ENCODE measurements at regions of chr7 and their contacts with region 1.

Region 1: GRCh38 chr7:22110227-22110839 is 164.6 kb upstream of the CDCA7L start:
- DNase-seq: peak; percentile 74
- H3K4me3 ChIP-seq: no peak overlapping the region; a peak in 1 of 4 replicates
- H3K27ac ChIP-seq: no peak overlapping the region
- H3K4me1 ChIP-seq: peaks cover 0 to 7% of the 10 kb centered on the region in 2 experiments; a peak in 1 of 4 replicates
- H3K27me3 ChIP-seq: no peaks in the 10 kb centered on the region
- CTCF ChIP-seq: peak; percentile 99
- EP300 ChIP-seq: no peak
- RAD21 ChIP-seq: peak; percentile 100

Region 2: GRCh38 chr7:21850531-21851285 is 259.6 kb before region 1 on chr7:
- CTCF ChIA-PET with region 1: no interaction called
- POLR2A ChIA-PET with region 1: no interaction called
- DNase-seq: no peak
- H3K4me3 ChIP-seq: no peak overlapping the region
- H3K27ac ChIP-seq: peak overlapping the region in 1 of 2 experiments; percentile 2; a peak in 1 of 4 replicates
- H3K4me1 ChIP-seq: no peaks in the 10 kb centered on the region
- H3K27me3 ChIP-seq: no peaks in the 10 kb centered on the region; the same call in 1 of the 2 replicates
- CTCF ChIP-seq: no peak
- EP300 ChIP-seq: no peak
- RAD21 ChIP-seq: no peak

Region 3: DNA sequence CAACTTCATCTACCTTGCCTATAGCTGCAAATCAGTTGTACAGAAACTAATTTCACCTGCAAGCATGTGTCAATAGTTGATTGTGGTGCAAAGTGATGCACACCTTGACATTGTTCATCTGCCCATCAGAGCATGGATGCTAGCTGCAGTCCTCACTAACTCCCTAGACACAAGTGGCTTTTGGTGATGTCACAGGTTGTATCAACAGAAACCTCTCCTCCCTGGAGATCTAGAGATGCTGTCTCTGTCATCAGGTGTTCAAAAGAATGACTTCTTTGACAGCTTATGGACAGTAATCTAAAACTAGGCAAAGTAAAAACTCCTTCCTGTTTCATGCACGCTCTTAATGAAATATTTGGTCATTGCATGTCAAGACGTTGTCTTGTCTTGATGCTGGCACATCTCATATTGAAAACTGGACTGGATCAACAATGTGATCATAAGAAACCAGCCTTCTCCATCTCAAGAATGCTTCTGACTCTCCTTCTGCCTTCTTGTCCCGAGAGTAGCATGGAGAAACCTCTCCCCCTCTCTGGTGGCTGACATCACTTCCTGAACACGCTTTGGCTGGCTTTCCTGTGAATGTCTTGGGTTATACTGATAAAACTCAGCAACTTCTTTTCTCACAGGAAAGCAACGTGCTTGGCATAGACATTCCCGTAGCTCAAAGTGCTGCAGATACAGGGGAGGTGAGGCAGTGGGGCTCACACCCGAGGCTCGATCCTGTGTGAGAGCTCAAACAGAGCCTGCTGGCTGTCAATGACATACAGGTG is 11.6 kb after region 1 on chr7:
- CTCF ChIA-PET with region 1: interaction called, 52 read pairs
- POLR2A ChIA-PET with region 1: no interaction called
- DNase-seq: no peak
- H3K4me3 ChIP-seq: no peak overlapping the region
- H3K27ac ChIP-seq: no peak overlapping the region
- H3K4me1 ChIP-seq: peaks cover 0 to 17% of the 10 kb centered on the region in 2 experiments; a peak in 1 of 4 replicates
- H3K27me3 ChIP-seq: no peaks in the 10 kb centered on the region
- CTCF ChIP-seq: no peak
- EP300 ChIP-seq: no peak
- RAD21 ChIP-seq: no peak

Region 4: DNA sequence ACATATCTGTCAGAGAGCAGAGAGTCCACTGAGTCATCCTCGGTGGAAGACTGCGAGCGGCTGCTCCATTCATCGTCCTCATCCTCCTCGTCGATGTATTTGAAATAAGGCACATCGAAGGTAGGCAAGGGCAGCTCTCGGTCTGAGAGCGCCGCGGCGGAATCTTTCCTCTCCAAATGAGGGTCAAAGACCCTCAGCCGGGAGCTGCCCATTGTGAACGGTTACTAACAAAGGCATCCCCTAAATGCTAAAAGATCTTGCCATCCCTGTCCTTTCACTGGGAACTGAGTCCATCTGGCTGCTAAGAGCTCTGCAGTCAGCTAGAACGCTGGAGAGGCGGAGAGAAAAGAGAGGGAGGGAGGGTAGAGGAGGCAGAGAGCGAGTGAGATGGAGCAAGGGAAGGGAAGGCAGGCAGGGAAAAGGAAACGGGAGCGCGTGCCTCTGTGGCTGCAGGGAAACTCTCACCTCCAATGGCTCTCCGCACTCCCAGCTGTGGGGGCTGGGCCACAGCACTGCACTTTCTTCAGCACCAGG is 83.2 kb after region 1 on chr7:
- CTCF ChIA-PET with region 1: interaction called, 11 read pairs
- POLR2A ChIA-PET with region 1: no interaction called
- DNase-seq: no peak
- H3K4me3 ChIP-seq: no peak overlapping the region
- H3K27ac ChIP-seq: no peak overlapping the region
- H3K4me1 ChIP-seq: peaks cover 0 to 4% of the 10 kb centered on the region in 2 experiments; a peak in 1 of 4 replicates
- H3K27me3 ChIP-seq: no peaks in the 10 kb centered on the region
- CTCF ChIP-seq: no peak
- EP300 ChIP-seq: no peak
- RAD21 ChIP-seq: no peak

Region 5: GRCh38 chr7:22295402-22296264 is 185.3 kb after region 1 on chr7:
- CTCF ChIA-PET with region 1: interaction called, 12 read pairs
- POLR2A ChIA-PET with region 1: no interaction called
- DNase-seq: no peak
- H3K4me3 ChIP-seq: no peak overlapping the region
- H3K27ac ChIP-seq: no peak overlapping the region
- H3K4me1 ChIP-seq: no peaks in the 10 kb centered on the region
- H3K27me3 ChIP-seq: no peaks in the 10 kb centered on the region
- CTCF ChIP-seq: peak; percentile 44
- EP300 ChIP-seq: no peak
- RAD21 ChIP-seq: peak; percentile 47

Region 6: DNA sequence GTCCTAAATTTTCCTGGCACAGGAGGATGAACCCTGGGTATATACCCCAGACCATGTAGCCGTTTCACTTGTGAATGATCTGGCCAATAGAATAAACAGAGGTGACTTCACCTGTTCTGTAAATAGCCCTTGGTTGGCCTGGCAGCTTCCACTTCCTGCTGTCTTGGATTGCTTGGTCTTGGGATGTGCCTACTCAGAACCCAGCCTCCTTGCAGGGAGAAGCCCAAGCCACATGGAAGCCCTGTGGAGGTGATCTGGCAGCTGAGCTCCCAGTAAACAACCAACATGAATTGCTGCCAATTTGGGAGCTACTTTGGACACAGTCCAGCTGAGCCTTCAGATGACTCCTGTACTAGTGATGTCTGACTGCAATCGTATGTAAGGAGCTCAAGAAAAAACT is 251.5 kb after region 1 on chr7:
- CTCF ChIA-PET with region 1: interaction called, 14 read pairs
- POLR2A ChIA-PET with region 1: no interaction called
- DNase-seq: no peak
- H3K4me3 ChIP-seq: no peak overlapping the region
- H3K27ac ChIP-seq: no peak overlapping the region
- H3K4me1 ChIP-seq: peaks cover 0 to 8% of the 10 kb centered on the region in 2 experiments; a peak in 2 of 4 replicates
- H3K27me3 ChIP-seq: no peaks in the 10 kb centered on the region
- CTCF ChIP-seq: no peak
- EP300 ChIP-seq: no peak
- RAD21 ChIP-seq: no peak

Region 7: GRCh38 chr7:22460360-22460983 is 350.1 kb after region 1 on chr7:
- CTCF ChIA-PET with region 1: interaction called, 11 read pairs
- POLR2A ChIA-PET with region 1: no interaction called
- DNase-seq: no peak
- H3K4me3 ChIP-seq: no peak overlapping the region
- H3K27ac ChIP-seq: no peak overlapping the region
- H3K4me1 ChIP-seq: no peaks in the 10 kb centered on the region
- H3K27me3 ChIP-seq: no peaks in the 10 kb centered on the region
- CTCF ChIP-seq: no peak
- EP300 ChIP-seq: no peak
- RAD21 ChIP-seq: no peak

Region 8: GRCh38 chr7:22499044-22499443 is 388.7 kb after region 1 on chr7:
- CTCF ChIA-PET with region 1: interaction called, 69 read pairs
- POLR2A ChIA-PET with region 1: no interaction called
- DNase-seq: no peak
- H3K4me3 ChIP-seq: peak overlapping the region in 1 of 2 experiments; percentile 62; a peak in 3 of 4 replicates
- H3K27ac ChIP-seq: peak overlapping the region in 1 of 2 experiments; percentile 91; a peak in 2 of 4 replicates
- H3K4me1 ChIP-seq: peaks cover 3 to 28% of the 10 kb centered on the region in 2 experiments; a peak in 3 of 4 replicates
- H3K27me3 ChIP-seq: peaks cover under 1% of the 10 kb centered on the region; the same call in 1 of the 2 replicates
- CTCF ChIP-seq: no peak
- EP300 ChIP-seq: no peak
- RAD21 ChIP-seq: no peak

Region 9: GRCh38 chr7:22718200-22718711 is 607.9 kb after region 1 on chr7:
- CTCF ChIA-PET with region 1: no interaction called
- POLR2A ChIA-PET with region 1: no interaction called
- DNase-seq: no peak
- H3K4me3 ChIP-seq: peak overlapping the region in 1 of 2 experiments; percentile 36; a peak in 2 of 4 replicates
- H3K27ac ChIP-seq: peak overlapping the region; percentile 51 to 87; a peak in 3 of 4 replicates
- H3K4me1 ChIP-seq: peaks cover 2 to 11% of the 10 kb centered on the region in 2 experiments; a peak in 3 of 4 replicates
- H3K27me3 ChIP-seq: no peaks in the 10 kb centered on the region; the same call in 1 of the 2 replicates
- CTCF ChIP-seq: no peak
- EP300 ChIP-seq: 0 out of 4 replicates have a peak, but pooled peaks of 1 of the 2 experiments have one; percentile 28
- RAD21 ChIP-seq: no peak